Dendritic cell treated with granulocyte-macrophage colony-stimulating factor and Interleukin-4, amounts not matched to agents 40 ng/mL and 50 ng/mL, for 4 days (primary cell): ENCODE measurements at regions of chr11 and their contacts with region 1.

Region 1: GRCh38 chr11:43680521-43681400 is at the start of gene HSD17B12:
- H3K4me3 Mint-ChIP-seq: peak within 1 kb of the TSS; percentile 90
- H3K27ac Mint-ChIP-seq: peak within 1 kb of the TSS; percentile 98
- H3K4me1 Mint-ChIP-seq: peaks cover 24% of the 10 kb centered on the region
- H3K27me3 Mint-ChIP-seq: peaks cover 13% of the 10 kb centered on the region

Region 2: DNA sequence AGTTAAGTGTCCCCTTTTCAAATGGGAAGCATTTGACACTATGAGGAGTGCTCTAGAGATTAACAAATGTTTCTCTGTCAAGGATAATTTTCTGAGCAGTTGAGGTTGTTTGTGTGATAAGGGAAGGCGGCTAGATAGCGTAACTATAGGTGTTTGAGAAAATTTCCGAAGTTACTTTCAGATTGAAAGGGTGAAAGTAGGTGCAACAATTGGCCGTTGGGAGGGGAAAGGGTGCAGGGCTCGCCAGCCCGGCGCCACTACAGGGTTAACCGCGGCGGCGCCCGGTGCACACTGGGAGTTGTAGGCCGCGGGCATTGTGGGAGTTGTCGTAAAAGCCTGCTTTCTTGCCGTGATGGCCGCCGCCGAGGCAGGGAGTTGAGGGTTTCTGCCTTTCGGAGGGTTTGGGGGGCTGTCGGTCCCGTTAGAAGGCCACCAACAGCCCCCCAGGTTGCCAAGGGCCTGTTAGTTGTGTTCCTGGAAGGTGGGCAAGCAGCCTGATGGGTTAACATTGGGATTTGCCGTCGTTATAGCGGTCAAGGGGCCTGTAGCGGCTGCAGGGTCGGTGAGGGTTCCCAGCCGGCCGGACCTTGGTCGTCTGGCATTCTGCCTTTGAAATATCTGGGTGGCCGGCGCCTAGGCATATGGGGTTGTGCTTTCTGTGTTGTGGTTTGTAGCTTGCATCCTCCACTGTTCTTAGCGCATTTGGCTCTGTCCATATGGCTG is 36.7 kb before region 1 on chr11:
- intact Hi-C with region 1: loop called (anchors 1 kb)
- H3K4me3 Mint-ChIP-seq: peak overlapping the region; percentile 96
- H3K27ac Mint-ChIP-seq: peak overlapping the region; percentile 91
- H3K4me1 Mint-ChIP-seq: peaks cover 11% of the 10 kb centered on the region
- H3K27me3 Mint-ChIP-seq: peaks cover 12% of the 10 kb centered on the region

Region 3: DNA sequence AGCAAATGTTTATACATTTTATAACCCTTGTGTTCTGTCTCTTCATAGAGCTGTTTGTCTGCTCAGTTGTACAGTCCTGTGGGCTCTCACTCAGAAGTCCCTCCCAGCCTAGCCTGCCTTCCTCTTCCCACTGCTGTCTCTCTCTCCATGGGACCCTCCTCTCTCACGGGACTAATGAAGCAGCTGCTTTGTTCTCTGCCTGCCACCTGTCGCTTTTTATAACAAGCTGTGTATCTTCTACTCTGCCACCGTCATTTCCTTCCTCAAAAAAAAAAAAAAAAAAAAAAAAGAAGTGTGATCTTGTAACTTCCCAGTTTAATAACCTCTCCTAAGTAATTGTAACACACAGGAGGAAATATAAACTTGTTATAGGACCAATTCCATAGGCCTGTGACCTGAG is 107.7 kb after region 1 on chr11:
- intact Hi-C with region 1: loop called (anchors 10 kb)
- H3K4me3 Mint-ChIP-seq: peak overlapping the region; percentile 50
- H3K27ac Mint-ChIP-seq: peak overlapping the region; percentile 87
- H3K4me1 Mint-ChIP-seq: peaks cover 19% of the 10 kb centered on the region
- H3K27me3 Mint-ChIP-seq: no peaks in the 10 kb centered on the region